ENCODE measurements at regions of chr18 and their contacts with region 1.

Region 1: DNA sequence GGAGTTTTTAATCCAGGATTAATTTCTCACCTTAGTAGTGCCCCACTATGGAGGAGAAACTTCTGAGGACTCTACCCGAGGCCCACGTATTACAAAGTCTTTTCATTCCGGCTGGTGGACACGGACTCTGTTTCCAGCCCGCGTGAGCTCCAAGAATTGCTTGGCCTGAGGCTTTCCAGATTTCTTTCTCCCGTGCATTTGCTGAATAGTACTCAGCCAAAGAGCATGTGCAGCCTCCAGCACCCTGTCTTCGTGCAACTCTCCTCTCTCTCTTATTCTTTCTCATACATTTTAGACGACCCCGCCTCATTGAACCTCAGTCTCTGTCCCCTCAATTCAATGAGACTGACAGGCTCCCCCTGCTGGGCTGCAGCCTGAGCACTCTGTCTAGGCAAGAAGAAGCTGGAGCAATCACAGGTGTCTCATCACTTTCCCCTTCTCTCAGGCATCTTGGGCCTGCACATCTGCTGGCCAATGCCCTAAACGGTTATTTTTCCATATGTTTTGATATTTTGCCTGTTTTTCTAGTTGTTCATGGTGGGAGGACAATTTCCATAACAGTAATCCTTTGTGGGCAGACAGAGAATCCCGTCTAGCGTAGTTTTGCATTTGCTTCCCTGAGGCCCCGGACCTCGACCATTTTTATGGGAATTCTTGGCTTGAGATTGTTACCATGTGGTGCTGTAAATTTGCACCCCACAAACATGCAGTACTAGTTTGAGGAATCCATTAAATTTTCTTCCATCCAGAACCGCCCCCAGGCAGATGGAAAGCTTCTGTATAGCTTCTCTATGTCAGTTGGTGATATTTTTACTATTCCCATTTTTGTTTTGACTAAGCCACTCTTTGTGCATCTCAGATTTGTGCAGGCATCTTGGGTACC is 50.1 kb upstream of the LPIN2 start:
- DNase-seq: peak; percentile 61 to 76
- ATAC-seq: peak; percentile 56 to 76 (median 68)
- H3K4me3 ChIP-seq: peak overlapping the region in 2 of 10 donors; percentile 22
- H3K27ac ChIP-seq: peak overlapping the region in 1 of 10 donors; percentile 87
- H3K4me1 ChIP-seq: peaks cover 0 to 52% (median 12%) of the 10 kb centered on the region in 9 donors
- H3K27me3 ChIP-seq: no peaks in the 10 kb centered on the region
- CTCF ChIP-seq: peak; percentile 47 to 87 (median 79)

Region 2: DNA sequence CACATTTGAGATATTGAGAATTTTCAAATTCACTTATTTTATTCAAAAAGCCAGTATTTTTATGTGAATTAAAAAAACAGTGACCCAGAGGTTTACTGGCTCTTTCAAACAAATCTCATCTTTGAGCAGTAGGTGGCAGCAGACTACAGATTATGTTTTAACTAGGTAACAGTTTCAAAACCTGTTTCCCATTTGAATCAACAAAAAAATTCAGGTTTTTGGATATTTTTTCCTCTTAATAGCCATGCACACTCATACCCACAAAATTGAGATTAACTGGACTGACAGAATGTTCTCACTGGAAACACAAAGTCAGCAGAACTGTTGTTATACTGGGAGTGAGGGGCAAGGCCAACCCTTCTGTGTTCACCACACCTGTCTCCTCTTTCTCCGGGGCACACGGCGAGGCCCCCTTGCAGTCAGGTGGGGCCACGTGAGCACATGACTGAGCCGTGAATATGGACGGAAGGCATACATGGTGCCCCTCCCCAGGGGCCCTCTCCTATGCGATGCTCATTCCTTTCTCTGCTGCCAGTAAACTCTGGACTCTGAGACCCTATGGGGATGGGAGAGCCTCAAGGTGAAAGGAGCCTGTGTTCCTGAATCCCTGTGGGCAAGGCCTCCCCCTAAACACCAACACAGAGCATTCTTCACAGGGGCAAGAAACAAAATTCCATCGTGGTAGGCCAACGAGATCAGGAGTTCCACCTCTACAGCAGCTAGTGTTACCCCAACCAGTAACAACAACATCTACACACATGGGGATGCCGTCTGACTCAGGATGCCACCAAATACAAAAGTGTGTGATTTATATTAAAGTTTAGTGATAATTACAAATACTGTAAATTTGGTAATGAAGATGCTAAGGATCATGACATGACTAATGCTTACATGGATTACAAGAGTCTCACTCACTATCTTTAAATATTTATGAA is 130.5 kb before region 1 on chr18:
- intact Hi-C with region 1: loop called (anchors 1 to 10 kb)
- DNase-seq: peak in 1 of 2 donors; percentile 66
- ATAC-seq: peak in 5 of 8 donors; percentile 34 to 62 (median 56)
- H3K4me3 ChIP-seq: no peak overlapping the region
- H3K27ac ChIP-seq: no peak overlapping the region
- H3K4me1 ChIP-seq: peaks cover 0 to 4% (median 0%) of the 10 kb centered on the region in 9 donors
- H3K27me3 ChIP-seq: no peaks in the 10 kb centered on the region
- CTCF ChIP-seq: peak; percentile 60 to 87 (median 77)

Region 3: DNA sequence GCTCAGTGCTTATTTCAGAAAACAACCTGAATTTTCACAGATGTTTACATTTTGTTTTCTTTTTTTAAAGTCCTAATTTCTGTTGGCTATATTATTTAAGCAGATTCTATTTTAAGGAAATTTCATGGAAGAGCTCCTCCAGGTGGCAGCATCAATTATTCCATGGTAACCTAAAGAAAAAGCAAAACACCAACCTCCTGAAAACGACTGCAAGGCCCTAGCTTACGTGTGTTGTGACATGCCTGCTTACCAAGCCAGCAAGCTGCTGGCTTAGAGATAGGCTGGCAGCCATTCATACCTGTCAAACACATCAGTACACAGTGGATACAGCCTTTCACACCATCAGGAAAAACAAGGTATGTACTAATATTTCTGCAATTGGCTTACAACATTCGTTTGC is 115.0 kb before region 1 on chr18:
- intact Hi-C with region 1: loop called in 1 of 10 experiments (anchors 5 kb)
- DNase-seq: no peak
- ATAC-seq: peak in 7 of 8 donors; percentile 33 to 95 (median 81)
- H3K4me3 ChIP-seq: no peak overlapping the region
- H3K27ac ChIP-seq: peak overlapping the region in 2 of 10 donors; percentile 5 to 12
- H3K4me1 ChIP-seq: peaks cover 0 to 8% (median 3%) of the 10 kb centered on the region in 9 donors
- H3K27me3 ChIP-seq: no peaks in the 10 kb centered on the region
- CTCF ChIP-seq: peak in 6 of 9 donors; percentile 27 to 50 (median 42)

Region 4: DNA sequence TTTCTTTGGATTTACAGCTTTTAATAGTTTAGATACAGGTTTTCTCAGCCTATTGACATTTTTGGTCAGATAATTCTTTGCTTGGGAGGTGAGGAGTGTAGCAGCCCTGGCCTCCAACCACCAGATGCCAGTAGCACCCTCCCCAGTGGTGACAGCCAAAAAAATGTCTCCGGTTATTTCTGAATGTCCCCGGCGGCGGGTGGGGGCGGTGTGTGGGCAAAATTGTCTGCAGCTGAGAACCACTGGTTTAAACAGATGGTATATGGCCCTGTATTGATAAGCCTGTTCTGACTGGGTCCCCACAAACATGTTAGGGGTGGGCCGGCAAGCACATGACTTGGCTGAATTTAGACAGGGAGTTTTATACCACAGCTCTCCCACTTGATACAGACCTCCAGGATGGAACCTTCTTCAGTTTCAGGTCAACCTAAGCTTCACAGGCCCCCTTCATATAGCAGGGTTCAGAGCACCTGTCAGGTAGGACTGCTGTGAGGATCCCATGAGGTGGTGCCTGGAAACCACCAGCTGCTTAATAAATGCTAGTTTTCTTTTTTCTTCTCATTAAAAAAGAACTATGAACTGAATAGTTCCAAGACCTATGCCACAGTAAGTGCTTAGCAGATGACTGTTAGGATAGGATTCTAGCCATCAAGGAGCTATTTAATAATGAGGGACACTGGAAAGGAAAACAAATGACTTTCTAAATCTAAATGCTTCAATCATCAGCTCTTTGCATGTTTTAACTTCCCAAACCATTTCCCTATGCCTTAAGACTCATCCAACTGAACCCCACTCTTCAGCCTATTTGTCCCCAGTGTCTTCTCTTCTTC is 68.2 kb before region 1 on chr18:
- intact Hi-C with region 1: loop called in 2 of 10 experiments (anchors 2 to 10 kb)
- DNase-seq: peak in 1 of 2 donors; percentile 39
- ATAC-seq: peak; percentile 32 to 87 (median 66)
- H3K4me3 ChIP-seq: no peak overlapping the region
- H3K27ac ChIP-seq: peak overlapping the region in 1 of 10 donors; percentile 24
- H3K4me1 ChIP-seq: peaks cover 2 to 52% (median 31%) of the 10 kb centered on the region in 9 donors
- H3K27me3 ChIP-seq: no peaks in the 10 kb centered on the region
- CTCF ChIP-seq: peak; percentile 23 to 61 (median 42)

Region 5: DNA sequence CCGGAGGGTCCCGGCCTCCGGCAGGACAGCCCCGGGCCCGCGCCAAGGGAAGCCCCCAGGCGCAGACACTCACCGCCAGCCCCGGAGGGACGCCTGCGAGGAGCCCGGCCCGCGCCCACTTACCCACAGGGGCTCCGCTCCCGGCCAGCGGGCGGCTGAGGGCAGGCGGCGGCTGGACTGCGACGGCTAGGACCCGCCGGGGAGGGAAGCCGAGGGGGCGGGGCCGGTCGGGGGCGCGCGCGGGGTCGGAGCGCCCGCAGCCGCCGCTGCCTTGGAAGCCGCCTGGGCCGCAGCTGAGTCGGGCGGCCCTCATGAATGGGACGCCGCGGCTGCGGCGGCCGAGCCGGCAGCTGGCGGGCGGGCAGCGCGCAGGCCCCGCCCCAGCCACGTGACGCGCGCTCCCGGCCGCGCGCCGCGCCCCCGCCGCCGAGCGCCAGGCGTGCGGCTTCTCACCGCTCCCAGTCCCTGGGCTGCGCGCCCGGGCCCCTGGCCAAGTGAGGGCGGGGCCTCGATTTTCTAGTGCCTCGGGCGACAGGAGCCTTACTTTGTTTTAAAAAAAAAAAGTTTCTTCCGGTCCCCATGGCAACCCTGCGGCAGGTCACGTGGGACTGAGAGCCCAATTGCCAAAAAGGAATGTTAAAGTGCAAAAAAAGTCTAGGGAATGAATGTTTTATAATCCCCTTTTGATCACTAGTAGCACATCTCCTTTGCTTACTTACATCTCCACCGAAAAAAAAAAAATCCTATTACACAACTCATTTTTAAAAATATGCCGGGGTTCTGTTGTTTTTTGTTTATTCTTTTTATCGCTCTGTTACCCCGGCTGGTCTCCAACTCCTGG is 49.9 kb before region 1 on chr18 and contains the start of gene LPIN2:
- intact Hi-C with region 1: loop called in 8 of 10 experiments (anchors 2 to 10 kb)
- DNase-seq: peak; percentile 99 to 100
- ATAC-seq: peak; percentile 91 to 94 (median 92)
- H3K4me3 ChIP-seq: peak within 1 kb of the TSS; percentile 50 to 92 (median 88)
- H3K27ac ChIP-seq: peak within 1 kb of the TSS; percentile 57 to 99 (median 95)
- H3K4me1 ChIP-seq: peaks cover 3 to 84% (median 39%) of the 10 kb centered on the region in 9 donors
- H3K27me3 ChIP-seq: no peaks in the 10 kb centered on the region
- CTCF ChIP-seq: no peak
- total RNA-seq, gene LPIN2: 6.8 to 15.9 (median 8.2) TPM

Region 6: GRCh38 chr18:3129053-3129864 is 66.2 kb after region 1 on chr18:
- intact Hi-C with region 1: loop called in 1 of 10 experiments (anchors 10 kb)
- DNase-seq: peak; percentile 78 to 82
- ATAC-seq: peak; percentile 76 to 93 (median 85)
- H3K4me3 ChIP-seq: no peak overlapping the region
- H3K27ac ChIP-seq: peak overlapping the region in 1 of 10 donors; percentile 2
- H3K4me1 ChIP-seq: peaks cover 0 to 17% (median 7%) of the 10 kb centered on the region in 9 donors
- H3K27me3 ChIP-seq: no peaks in the 10 kb centered on the region
- CTCF ChIP-seq: peak; percentile 57 to 91 (median 82)

Measured in heart right ventricle (tissue), 16 donors.